ENCODE measurements at regions of chr10 and their contacts with region 1.

Region 1: DNA sequence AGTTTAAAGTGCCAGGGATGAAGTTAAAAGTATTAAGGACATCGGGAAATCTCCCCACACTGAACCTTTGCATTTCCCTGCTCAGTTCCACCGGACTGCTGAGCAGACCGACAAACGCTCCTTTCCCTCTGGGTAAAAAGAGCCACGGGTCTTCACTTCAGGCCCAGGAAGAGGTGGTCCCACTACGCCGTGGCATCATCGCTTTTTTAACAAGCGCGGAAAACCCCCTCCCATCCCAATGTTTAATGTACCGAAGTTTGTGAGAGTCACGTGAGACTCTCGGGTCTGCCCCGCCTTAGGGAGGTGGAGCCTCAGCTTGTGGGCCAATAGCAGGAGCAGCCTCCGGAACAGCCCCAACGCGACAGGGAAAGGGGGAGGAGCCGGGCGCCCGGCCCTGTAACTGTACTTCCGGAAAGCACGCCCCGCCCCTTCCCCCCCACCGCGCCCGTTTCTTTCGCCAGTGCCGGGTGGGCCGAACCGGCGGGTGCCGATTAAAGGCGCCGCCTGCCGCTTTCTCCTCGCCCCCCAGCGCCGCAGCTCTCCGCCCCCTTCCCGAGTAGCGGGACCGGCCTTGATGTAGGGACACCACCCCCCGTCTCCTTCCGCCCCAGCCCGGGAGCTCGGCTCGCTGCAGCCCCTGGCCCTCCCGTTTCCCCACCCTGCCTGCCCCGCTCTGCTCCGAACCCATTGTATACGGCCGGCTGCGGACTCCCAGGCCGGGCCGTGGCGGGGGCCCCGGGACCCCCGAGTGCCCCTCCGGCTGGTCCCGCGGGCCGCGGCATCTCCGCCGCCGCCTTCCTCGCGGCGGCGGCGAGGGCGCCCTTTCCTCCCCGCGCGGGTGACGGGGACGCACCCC is 2.2 kb upstream of the TRIM8 start:
- DNase-seq: peak; percentile 89 to 99 (median 96)
- ATAC-seq: peak; percentile 57 to 75
- H3K4me3 Mint-ChIP-seq: peak overlapping the region; percentile 84 to 98 (median 92)
- H3K27ac Mint-ChIP-seq: peak overlapping the region; percentile 87 to 98 (median 96)
- H3K4me1 Mint-ChIP-seq: peaks cover 15 to 20% (median 17%) of the 10 kb centered on the region in 4 donors
- H3K27me3 Mint-ChIP-seq: no peaks in the 10 kb centered on the region

Region 2: GRCh38 chr10:102394079-102394800 is 247.9 kb before region 1 on chr10:
- POLR2A ChIA-PET with region 1: interaction called, 13 read pairs
- DNase-seq: peak; percentile 96 to 100 (median 99)
- ATAC-seq: peak; percentile 77 to 80
- H3K4me3 Mint-ChIP-seq: peak overlapping the region; percentile 93 to 98 (median 96)
- H3K27ac Mint-ChIP-seq: peak overlapping the region; percentile 92 to 100 (median 100)
- H3K4me1 Mint-ChIP-seq: peaks cover 13 to 46% (median 41%) of the 10 kb centered on the region in 4 donors
- H3K27me3 Mint-ChIP-seq: no peaks in the 10 kb centered on the region

Region 3: DNA sequence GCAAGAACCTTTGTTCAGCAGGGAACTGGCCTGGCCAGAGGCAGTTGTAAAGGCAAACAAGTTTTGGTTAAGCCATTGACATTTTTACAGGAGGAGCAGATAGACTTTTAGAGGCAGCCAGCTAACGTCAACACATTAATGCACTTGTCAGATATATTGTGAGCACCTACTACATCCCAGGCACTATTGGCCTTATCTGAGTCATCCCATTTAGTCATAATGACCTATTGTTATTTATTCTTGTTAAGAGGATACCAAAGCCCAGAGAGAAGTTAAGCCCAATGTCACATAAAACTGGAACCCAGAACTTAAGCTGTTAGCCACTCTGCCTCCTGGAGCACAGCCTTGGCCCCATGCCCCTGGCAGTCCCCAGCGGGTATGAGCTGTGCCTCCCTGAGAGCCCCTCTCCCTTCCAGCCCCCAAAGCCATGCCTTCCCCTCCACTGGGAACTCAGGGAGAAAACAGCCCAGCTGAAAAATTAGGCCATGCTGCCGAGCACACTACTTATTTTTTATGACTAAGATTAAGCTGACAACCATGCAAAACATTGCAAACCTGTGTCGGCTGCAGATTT is 30.5 kb before region 1 on chr10:
- POLR2A ChIA-PET with region 1: interaction called, 28 read pairs
- DNase-seq: no peak
- ATAC-seq: no peak
- H3K4me3 Mint-ChIP-seq: peak overlapping the region in 2 of 10 donors; percentile 27 to 51
- H3K27ac Mint-ChIP-seq: peak overlapping the region; percentile 61 to 100 (median 98)
- H3K4me1 Mint-ChIP-seq: peaks cover 13 to 44% (median 35%) of the 10 kb centered on the region in 4 donors
- H3K27me3 Mint-ChIP-seq: no peaks in the 10 kb centered on the region

Region 4: DNA sequence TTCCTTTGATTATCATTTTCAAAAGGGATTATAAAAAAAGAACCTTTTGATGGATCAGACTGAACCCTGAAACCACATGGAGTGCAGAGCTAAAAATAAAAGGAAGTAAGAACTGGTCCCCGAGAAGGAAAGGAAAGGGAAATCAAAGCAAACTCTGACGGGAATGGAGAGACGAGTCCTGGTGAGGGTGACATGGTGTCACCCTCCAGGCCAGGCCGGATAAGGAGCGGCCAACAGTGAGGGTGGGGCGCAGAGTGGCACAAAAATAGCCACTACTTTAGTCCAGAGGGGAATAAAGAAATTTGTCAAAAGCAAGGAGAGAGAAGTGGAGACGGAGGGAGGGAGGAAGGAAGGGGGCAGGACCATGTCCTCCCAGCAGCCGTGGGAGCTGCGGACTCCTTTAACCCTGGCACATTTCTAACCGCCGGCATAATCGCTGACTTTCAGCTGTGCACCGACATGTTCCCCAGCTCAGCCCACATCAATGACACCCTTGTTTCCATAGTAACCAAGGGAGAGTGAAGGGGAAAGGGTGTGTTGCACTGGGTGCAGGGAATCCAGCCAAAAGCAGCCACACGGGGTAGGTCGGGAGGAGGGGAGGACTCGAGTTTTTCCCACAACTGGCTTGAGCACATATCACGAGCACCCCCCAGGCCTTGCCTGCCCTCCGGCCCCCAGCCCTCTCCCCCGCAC is 31.9 kb after region 1 on chr10:
- POLR2A ChIA-PET with region 1: interaction called, 624 read pairs
- DNase-seq: peak; percentile 50 to 92 (median 85)
- ATAC-seq: peak; percentile 87 to 95
- H3K4me3 Mint-ChIP-seq: peak overlapping the region; percentile 75 to 91 (median 87)
- H3K27ac Mint-ChIP-seq: peak overlapping the region; percentile 90 to 98 (median 96)
- H3K4me1 Mint-ChIP-seq: peaks cover 23 to 83% (median 62%) of the 10 kb centered on the region in 4 donors
- H3K27me3 Mint-ChIP-seq: no peaks in the 10 kb centered on the region

Region 5: GRCh38 chr10:102743588-102744373 is 101.7 kb after region 1 on chr10 and contains the start of gene WBP1L:
- POLR2A ChIA-PET with region 1: interaction called, 43 read pairs
- DNase-seq: peak; percentile 79 to 98 (median 95)
- ATAC-seq: peak; percentile 96 to 98
- H3K4me3 Mint-ChIP-seq: peak within 1 kb of the TSS; percentile 83 to 99 (median 94)
- H3K27ac Mint-ChIP-seq: peak within 1 kb of the TSS; percentile 87 to 97 (median 95)
- H3K4me1 Mint-ChIP-seq: peaks cover 35 to 57% (median 51%) of the 10 kb centered on the region in 4 donors
- H3K27me3 Mint-ChIP-seq: no peaks in the 10 kb centered on the region
- polyA plus RNA-seq, gene WBP1L: 22.6 to 28.2 (median 24.1) TPM

Region 6: GRCh38 chr10:102835007-102835482 is 192.9 kb after region 1 on chr10:
- POLR2A ChIA-PET with region 1: no interaction called
- DNase-seq: peak; percentile 49 to 85 (median 70)
- ATAC-seq: peak; percentile 86 to 99
- H3K4me3 Mint-ChIP-seq: no peak overlapping the region
- H3K27ac Mint-ChIP-seq: no peak overlapping the region
- H3K4me1 Mint-ChIP-seq: peaks cover 0 to 7% (median under 1%) of the 10 kb centered on the region in 4 donors
- H3K27me3 Mint-ChIP-seq: peaks cover 2 to 10% (median 6%) of the 10 kb centered on the region in 5 donors